ENCODE measurements at regions of chr4 and their contacts with region 1.

Region 1: DNA sequence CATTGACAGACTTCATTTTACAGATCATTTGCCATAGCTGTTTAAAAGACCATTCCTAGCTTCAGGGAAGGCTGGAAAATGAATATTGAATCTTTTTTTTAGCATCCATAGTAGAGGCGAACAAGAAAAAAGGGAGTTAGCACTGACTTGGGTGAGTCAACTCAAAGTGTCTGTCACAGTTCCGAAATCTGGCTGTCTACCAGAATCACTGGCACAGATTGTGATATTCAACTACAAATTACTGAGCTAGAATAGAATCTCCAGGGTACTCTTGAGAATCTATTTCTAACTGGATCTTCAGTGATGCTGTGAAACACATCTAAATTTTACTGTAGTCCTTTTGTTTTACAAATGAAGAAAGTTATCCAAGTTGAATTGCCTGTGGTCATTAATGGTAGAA is 31.5 kb downstream of the SEC24B start:
- DNase-seq: no peak
- H3K4me3 ChIP-seq: no peak overlapping the region
- H3K27ac ChIP-seq: no peak overlapping the region
- H3K27me3 ChIP-seq: no peaks in the 10 kb centered on the region
- CTCF ChIP-seq: no peak

Region 2: DNA sequence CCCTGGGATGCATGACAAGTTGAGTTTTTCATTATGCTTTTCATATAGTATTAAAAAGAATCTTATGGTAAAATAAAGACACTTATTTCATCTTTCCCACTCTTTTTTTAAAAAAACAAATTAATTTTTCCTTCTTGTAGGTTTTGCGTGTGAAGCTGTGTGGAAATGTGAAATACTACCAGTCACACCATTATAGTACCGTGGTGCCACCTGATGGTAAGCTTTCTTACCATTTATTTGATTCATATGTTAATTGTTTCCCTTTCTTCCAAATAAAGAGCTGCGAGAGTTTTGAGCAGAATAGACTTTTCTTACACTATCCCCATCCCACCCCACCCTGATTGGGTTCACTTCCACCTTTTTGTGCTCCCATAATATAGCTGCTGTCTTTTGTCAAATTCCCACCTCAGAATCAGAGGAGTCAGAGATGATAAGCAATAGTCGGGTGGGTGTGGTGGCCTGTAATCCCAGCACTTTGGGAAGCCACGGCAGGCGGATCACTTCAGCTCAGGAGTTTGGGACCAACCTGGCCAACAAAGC is 193.9 kb after region 1 on chr4:
- CTCF ChIA-PET with region 1: interaction called, 11 read pairs
- POLR2A ChIA-PET with region 1: no interaction called
- DNase-seq: no peak
- H3K4me3 ChIP-seq: no peak overlapping the region
- H3K27ac ChIP-seq: no peak overlapping the region
- H3K27me3 ChIP-seq: no peaks in the 10 kb centered on the region
- CTCF ChIP-seq: 0 out of 2 replicates have a peak, but pooled peaks have one; percentile 4